CD8-positive, alpha-beta T cell (primary cell): ENCODE measurements at regions of chrX and their contacts with region 1.

Region 1: DNA sequence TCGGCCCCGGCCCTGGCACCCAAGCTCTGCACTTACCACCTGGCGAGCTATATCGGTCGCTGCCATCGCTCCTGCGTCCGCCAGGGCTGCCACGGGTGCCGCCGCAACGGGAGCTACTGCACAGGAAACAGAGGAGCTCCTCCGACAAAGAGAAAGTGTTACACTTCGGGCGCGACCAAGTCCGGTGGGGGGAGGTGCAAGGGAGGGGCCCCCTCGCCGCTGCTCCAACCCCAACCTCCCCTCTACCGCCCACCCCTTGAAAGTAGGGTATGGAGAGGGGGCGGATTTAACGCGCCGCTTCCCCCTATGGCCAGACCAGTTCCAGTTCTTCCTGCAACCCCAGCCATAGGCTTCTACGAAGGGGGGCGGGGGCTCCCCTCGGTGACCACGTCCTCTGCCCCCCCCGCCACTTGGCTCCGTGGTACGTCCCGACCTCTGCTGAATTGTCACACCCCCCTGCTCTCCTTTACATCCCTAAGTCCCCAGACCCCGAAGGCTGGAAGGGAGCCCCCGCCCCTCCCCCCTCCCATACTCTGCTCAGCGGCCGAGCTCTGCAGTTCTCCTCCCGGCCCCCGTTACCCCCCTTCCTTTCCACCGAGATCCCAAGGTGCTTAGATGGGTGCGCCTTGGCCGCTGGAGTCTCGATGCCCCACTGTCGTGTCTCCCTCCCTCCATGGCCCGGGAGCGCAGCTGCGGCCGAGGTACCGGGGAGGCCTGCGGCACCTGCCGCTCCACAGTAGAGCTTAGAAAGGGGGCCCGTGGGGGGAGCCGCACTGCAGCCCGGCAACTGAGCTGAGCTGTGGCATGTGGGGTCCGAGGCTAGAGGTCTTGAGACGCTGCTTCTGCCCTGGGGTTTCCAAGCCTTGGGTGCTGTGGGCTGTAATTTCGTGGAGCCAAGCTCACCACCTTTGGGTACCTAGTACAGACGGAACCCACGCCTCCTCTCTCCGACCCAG is at the start of gene SEPTIN6:
- DNase-seq: peak; percentile 63 to 92 (median 86)
- ATAC-seq: peak; percentile 64
- H3K4me3 ChIP-seq: peak within 1 kb of the TSS; percentile 74 to 78
- H3K4me3 Mint-ChIP-seq: peak within 1 kb of the TSS; percentile 97
- H3K27ac ChIP-seq: peak within 1 kb of the TSS; percentile 82 to 99
- H3K27ac Mint-ChIP-seq: peak within 1 kb of the TSS; percentile 99
- H3K4me1 ChIP-seq: peaks cover 15% of the 10 kb centered on the region
- H3K4me1 Mint-ChIP-seq: peaks cover 17% of the 10 kb centered on the region
- H3K27me3 ChIP-seq: no peaks in the 10 kb centered on the region
- H3K27me3 Mint-ChIP-seq: no peaks in the 10 kb centered on the region
- CTCF ChIP-seq: no peak
- total RNA-seq, gene SEPTIN6: 136 to 138 TPM

Region 2: GRCh38 chrX:118751950-118752783 is 941.2 kb before region 1 on chrX:
- CTCF ChIA-PET with region 1: no interaction called
- POLR2A ChIA-PET with region 1: no interaction called
- intact Hi-C with region 1: no loop called
- DNase-seq: peak in 1 of 9 experiments; percentile 7
- ATAC-seq: no peak
- H3K4me3 ChIP-seq: no peak overlapping the region
- H3K4me3 Mint-ChIP-seq: no peak overlapping the region
- H3K27ac ChIP-seq: no peak overlapping the region
- H3K27ac Mint-ChIP-seq: no peak overlapping the region
- H3K4me1 ChIP-seq: no peaks in the 10 kb centered on the region
- H3K4me1 Mint-ChIP-seq: no peaks in the 10 kb centered on the region
- H3K27me3 ChIP-seq: no peaks in the 10 kb centered on the region
- H3K27me3 Mint-ChIP-seq: peaks cover 7% of the 10 kb centered on the region
- CTCF ChIP-seq: no peak

Region 3: GRCh38 chrX:119222932-119223331 is 470.4 kb before region 1 on chrX:
- CTCF ChIA-PET with region 1: no interaction called
- POLR2A ChIA-PET with region 1: no interaction called
- intact Hi-C with region 1: no loop called
- DNase-seq: no peak
- ATAC-seq: no peak
- H3K4me3 ChIP-seq: no peak overlapping the region
- H3K4me3 Mint-ChIP-seq: no peak overlapping the region
- H3K27ac ChIP-seq: no peak overlapping the region
- H3K27ac Mint-ChIP-seq: no peak overlapping the region
- H3K4me1 ChIP-seq: no peaks in the 10 kb centered on the region
- H3K4me1 Mint-ChIP-seq: no peaks in the 10 kb centered on the region
- H3K27me3 ChIP-seq: no peaks in the 10 kb centered on the region
- H3K27me3 Mint-ChIP-seq: peaks cover 21% of the 10 kb centered on the region
- CTCF ChIP-seq: no peak

Region 4: GRCh38 chrX:119606280-119607015 is 86.9 kb before region 1 on chrX and contains the start of gene NKRF:
- CTCF ChIA-PET with region 1: interaction called, 5 read pairs
- POLR2A ChIA-PET with region 1: no interaction called
- intact Hi-C with region 1: loop called (anchors 1 to 5 kb)
- DNase-seq: peak; percentile 79 to 96 (median 88)
- ATAC-seq: peak; percentile 76
- H3K4me3 ChIP-seq: peak within 1 kb of the TSS; percentile 89 to 90
- H3K4me3 Mint-ChIP-seq: peak within 1 kb of the TSS; percentile 87
- H3K27ac ChIP-seq: peak within 1 kb of the TSS; percentile 94 to 96
- H3K27ac Mint-ChIP-seq: peak within 1 kb of the TSS; percentile 97
- H3K4me1 ChIP-seq: peaks cover 7% of the 10 kb centered on the region
- H3K4me1 Mint-ChIP-seq: peaks cover 39% of the 10 kb centered on the region
- H3K27me3 ChIP-seq: no peaks in the 10 kb centered on the region
- H3K27me3 Mint-ChIP-seq: no peaks in the 10 kb centered on the region
- CTCF ChIP-seq: no peak
- total RNA-seq, gene NKRF: 18.3 to 20.5 TPM

Region 5: GRCh38 chrX:119669424-119670037 is 23.8 kb before region 1 on chrX:
- CTCF ChIA-PET with region 1: interaction called, 4 read pairs
- POLR2A ChIA-PET with region 1: interaction called, 87 read pairs
- intact Hi-C with region 1: no loop called
- DNase-seq: no peak
- ATAC-seq: no peak
- H3K4me3 ChIP-seq: no peak overlapping the region
- H3K4me3 Mint-ChIP-seq: no peak overlapping the region
- H3K27ac ChIP-seq: no peak overlapping the region
- H3K27ac Mint-ChIP-seq: peak overlapping the region; percentile 49
- H3K4me1 ChIP-seq: peaks cover 26% of the 10 kb centered on the region
- H3K4me1 Mint-ChIP-seq: peaks cover 37% of the 10 kb centered on the region
- H3K27me3 ChIP-seq: no peaks in the 10 kb centered on the region
- H3K27me3 Mint-ChIP-seq: no peaks in the 10 kb centered on the region
- CTCF ChIP-seq: no peak

Region 6: GRCh38 chrX:119729408-119730201 is 36.3 kb after region 1 on chrX:
- CTCF ChIA-PET with region 1: interaction called, 16 read pairs
- POLR2A ChIA-PET with region 1: no interaction called
- intact Hi-C with region 1: loop called in 1 of 2 experiments (anchors 2 kb)
- DNase-seq: peak; percentile 28 to 79 (median 67)
- ATAC-seq: peak; percentile 60
- H3K4me3 ChIP-seq: no peak overlapping the region
- H3K4me3 Mint-ChIP-seq: no peak overlapping the region
- H3K27ac ChIP-seq: no peak overlapping the region
- H3K27ac Mint-ChIP-seq: no peak overlapping the region
- H3K4me1 ChIP-seq: peaks cover 5% of the 10 kb centered on the region
- H3K4me1 Mint-ChIP-seq: peaks cover 11% of the 10 kb centered on the region
- H3K27me3 ChIP-seq: no peaks in the 10 kb centered on the region
- H3K27me3 Mint-ChIP-seq: no peaks in the 10 kb centered on the region
- CTCF ChIP-seq: peak; percentile 63

Region 7: GRCh38 chrX:119791438-119792231 is 98.3 kb after region 1 on chrX and contains the start of gene RPL39:
- CTCF ChIA-PET with region 1: no interaction called
- POLR2A ChIA-PET with region 1: interaction called, 9 read pairs
- intact Hi-C with region 1: loop called in 1 of 2 experiments (anchors 5 kb)
- DNase-seq: peak; percentile 57 to 93 (median 78)
- ATAC-seq: peak; percentile 90
- H3K4me3 ChIP-seq: peak within 1 kb of the TSS; percentile 84 to 97
- H3K4me3 Mint-ChIP-seq: peak within 1 kb of the TSS; percentile 97
- H3K27ac ChIP-seq: peak within 1 kb of the TSS; percentile 88 to 98
- H3K27ac Mint-ChIP-seq: peak within 1 kb of the TSS; percentile 98
- H3K4me1 ChIP-seq: peaks cover 31% of the 10 kb centered on the region
- H3K4me1 Mint-ChIP-seq: peaks cover 44% of the 10 kb centered on the region
- H3K27me3 ChIP-seq: no peaks in the 10 kb centered on the region
- H3K27me3 Mint-ChIP-seq: no peaks in the 10 kb centered on the region
- CTCF ChIP-seq: no peak
- total RNA-seq, gene RPL39: 4,125 to 4,338 TPM